Aorta (tissue), 5 donors: ENCODE measurements at regions of chr9 and their contacts with region 1.

Region 1: GRCh38 chr9:129177791-129178559 is at the start of gene IER5L:
- DNase-seq: peak; percentile 97
- ATAC-seq: peak; percentile 87
- H3K4me3 ChIP-seq: peak within 1 kb of the TSS; percentile 67 to 97
- H3K27ac ChIP-seq: peak within 1 kb of the TSS; percentile 51 to 85
- H3K4me1 ChIP-seq: no peaks in the 10 kb centered on the region
- H3K27me3 ChIP-seq: peaks cover 0 to 2% of the 10 kb centered on the region in 2 donors
- total RNA-seq, gene IER5L: 28.3 to 66.9 TPM

Region 2: GRCh38 chr9:129139993-129140396 is 38.0 kb before region 1 on chr9:
- intact Hi-C with region 1: loop called (anchors 1 to 2 kb)
- DNase-seq: peak; percentile 96
- ATAC-seq: peak; percentile 89
- H3K4me3 ChIP-seq: no peak overlapping the region
- H3K27ac ChIP-seq: peak overlapping the region; percentile 99 to 100
- H3K4me1 ChIP-seq: peaks cover 0 to 4% of the 10 kb centered on the region in 2 donors
- H3K27me3 ChIP-seq: no peaks in the 10 kb centered on the region

Region 3: GRCh38 chr9:129160712-129161533 is 17.1 kb before region 1 on chr9:
- intact Hi-C with region 1: no loop called
- DNase-seq: no peak
- ATAC-seq: no peak
- H3K4me3 ChIP-seq: no peak overlapping the region
- H3K27ac ChIP-seq: no peak overlapping the region
- H3K4me1 ChIP-seq: no peaks in the 10 kb centered on the region
- H3K27me3 ChIP-seq: no peaks in the 10 kb centered on the region

Region 4: DNA sequence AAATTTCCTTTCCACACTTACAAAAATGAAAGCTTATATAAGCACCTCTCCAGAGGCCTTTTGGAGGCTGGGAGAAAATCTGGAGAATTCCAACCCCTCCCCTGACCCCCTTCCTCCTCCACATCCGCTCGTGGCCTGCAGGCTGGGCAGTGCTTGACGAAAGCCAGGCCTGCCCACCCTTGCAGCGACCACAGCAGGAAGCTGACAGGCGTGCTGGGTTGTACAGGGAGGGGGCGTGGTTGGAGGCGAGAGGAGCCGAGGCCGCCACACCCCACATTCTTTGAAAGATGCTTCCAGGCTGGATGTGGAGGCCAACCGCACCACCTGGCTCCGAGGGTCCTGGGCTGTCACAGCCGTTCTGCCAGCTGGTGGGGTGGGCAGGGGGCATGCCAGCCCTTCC is 47.8 kb after region 1 on chr9:
- intact Hi-C with region 1: no loop called
- DNase-seq: peak in 1 of 2 donors; percentile 84
- ATAC-seq: peak; percentile 47
- H3K4me3 ChIP-seq: no peak overlapping the region
- H3K27ac ChIP-seq: no peak overlapping the region
- H3K4me1 ChIP-seq: no peaks in the 10 kb centered on the region
- H3K27me3 ChIP-seq: no peaks in the 10 kb centered on the region

Region 5: GRCh38 chr9:129258124-129258822 is 80.3 kb after region 1 on chr9:
- intact Hi-C with region 1: loop called in 1 of 2 experiments (anchors 2 kb)
- DNase-seq: peak; percentile 94 to 97
- ATAC-seq: peak; percentile 86
- H3K4me3 ChIP-seq: no peak overlapping the region
- H3K27ac ChIP-seq: no peak overlapping the region
- H3K4me1 ChIP-seq: no peaks in the 10 kb centered on the region
- H3K27me3 ChIP-seq: no peaks in the 10 kb centered on the region

Region 6: DNA sequence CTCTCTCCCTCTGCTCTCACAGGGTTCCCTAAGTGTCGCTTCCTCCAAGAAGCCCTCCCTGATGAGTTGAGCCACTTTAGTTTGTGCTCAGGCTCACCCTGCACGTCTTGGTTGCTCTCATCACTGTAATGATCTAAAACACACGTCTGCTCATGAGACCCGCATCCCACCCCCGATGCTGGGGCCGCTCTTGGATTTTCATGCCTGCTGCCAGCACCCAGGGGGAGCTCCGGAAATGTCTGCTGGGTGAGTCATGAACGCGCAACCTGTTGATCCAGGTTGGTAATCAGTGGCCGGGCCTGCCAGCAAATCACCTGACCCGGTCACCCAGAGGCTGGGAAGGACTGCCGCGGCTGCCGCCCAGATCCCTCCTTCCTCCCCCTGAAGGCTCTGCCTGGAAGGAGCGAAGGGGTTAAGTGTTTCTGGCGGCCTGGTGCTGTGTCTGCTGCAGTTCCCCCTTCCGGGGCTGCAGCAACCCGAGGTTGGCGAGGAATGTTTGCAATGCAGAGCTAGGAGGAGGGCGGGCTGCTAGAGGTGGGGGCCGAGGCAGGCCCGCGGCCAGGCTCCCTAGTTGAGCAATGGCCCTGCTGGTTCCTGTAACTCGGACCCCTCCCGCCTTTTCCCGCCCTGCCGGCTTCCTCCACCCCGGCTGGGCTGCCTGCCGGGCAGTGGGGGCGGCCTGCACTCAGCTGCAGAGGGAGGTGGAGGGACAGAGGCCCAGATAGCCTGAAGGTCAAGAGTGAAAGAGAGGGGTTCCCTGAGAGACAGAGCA is 156.2 kb after region 1 on chr9:
- intact Hi-C with region 1: loop called (anchors 2 to 5 kb)
- DNase-seq: peak; percentile 96 to 98
- ATAC-seq: peak; percentile 93
- H3K4me3 ChIP-seq: no peak overlapping the region
- H3K27ac ChIP-seq: peak overlapping the region; percentile 46 to 99
- H3K4me1 ChIP-seq: no peaks in the 10 kb centered on the region
- H3K27me3 ChIP-seq: no peaks in the 10 kb centered on the region

Region 7: DNA sequence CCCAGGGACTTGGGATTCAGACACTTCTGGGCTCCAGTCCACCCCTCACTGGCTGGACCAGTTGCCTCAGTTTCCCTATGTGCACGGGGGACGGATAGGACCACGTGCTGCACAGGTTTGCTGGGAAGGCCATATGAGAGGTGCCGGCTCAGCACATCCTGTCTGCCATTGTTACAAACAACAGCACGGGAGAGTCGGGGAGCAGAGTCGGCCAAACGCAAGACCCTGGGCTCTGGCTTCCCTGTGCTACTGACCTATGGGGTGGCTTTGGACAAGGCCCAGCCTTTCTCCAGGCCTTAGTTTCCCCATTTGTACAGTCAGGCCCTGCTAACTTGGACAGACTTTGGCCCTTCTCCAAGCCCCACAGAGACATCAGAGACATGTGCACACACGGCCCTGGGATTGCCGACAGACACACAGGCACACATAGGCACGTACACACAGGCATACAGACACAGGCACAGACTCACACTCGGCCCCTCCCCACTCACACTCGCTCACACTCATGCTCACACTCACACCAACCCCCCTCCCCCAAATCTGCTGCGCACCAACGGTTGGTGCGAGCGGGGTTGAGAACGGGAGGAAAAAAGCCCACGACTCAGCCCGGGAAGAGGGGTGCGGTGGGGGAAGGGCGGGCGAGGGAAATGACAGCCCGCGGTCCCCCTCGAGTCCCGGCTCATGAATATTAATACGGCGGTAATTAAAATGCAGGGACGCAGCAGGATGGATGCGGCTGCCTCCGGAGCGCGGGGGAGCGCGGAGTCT is 309.9 kb after region 1 on chr9:
- intact Hi-C with region 1: loop called (anchors 2 kb)
- DNase-seq: peak; percentile 82 to 85
- ATAC-seq: peak; percentile 24
- H3K4me3 ChIP-seq: no peak overlapping the region
- H3K27ac ChIP-seq: peak overlapping the region; percentile 95 to 99
- H3K4me1 ChIP-seq: no peaks in the 10 kb centered on the region
- H3K27me3 ChIP-seq: no peaks in the 10 kb centered on the region